Naive thymus-derived CD4-positive, alpha-beta T cell (primary cell): ENCODE measurements at regions of chr20 and their contacts with region 1.

Region 1: DNA sequence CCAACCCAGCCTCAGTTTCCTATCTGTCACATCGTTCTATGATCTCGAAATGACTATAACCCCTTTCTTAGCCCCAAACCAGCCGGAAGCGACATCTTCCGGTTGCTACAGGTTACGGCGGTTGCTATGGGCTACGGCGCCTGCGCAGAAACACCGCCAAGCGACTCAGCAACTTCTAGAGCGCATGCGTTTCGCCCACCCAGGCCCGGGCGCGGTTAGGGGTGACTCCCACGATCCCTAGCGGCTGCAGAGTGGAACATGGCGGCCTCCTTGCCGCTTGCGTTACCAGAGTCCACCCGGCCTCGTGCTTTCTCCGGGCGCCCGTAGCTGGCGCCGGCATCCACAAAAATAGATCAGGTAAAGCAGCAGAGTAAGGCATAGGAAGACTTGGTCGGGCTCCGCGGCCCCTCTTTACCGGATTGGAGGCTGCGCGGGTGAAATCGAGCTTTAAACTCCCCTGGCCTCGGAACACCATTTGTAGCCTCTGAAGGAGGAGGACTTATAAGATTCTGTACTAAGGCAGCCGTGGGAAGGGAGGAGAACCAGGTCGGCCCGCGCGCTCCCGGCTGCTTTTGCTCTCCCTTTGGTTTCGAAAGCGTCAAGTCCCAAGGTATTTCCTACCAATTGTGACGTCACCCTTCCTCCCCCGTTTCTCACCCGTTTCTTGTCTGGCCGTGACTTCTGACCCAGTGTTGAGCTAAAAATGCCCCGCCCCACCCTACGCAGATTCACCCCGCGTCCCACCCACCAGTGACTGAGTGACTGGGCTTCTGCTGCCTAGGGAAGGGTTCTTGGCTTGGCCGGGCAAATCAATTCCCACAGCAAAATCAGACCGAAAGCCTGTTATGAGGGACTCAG is 3.5 kb downstream of the SDCBP2 start:
- DNase-seq: peak; percentile 96 to 99 (median 98)
- ATAC-seq: peak; percentile 92
- H3K4me3 ChIP-seq: peak overlapping the region; percentile 95
- H3K4me3 Mint-ChIP-seq: no peak overlapping the region
- H3K27ac ChIP-seq: peak overlapping the region; percentile 97
- H3K27ac Mint-ChIP-seq: no peak overlapping the region
- H3K4me1 ChIP-seq: peaks cover 18 to 25% of the 10 kb centered on the region in 2 donors
- H3K4me1 Mint-ChIP-seq: peaks cover 0 to 31% (median 14%) of the 10 kb centered on the region in 7 donors
- H3K27me3 ChIP-seq: no peaks in the 10 kb centered on the region
- H3K27me3 Mint-ChIP-seq: no peaks in the 10 kb centered on the region

Region 2: GRCh38 chr20:1266167-1266973 is 59.0 kb before region 1 on chr20 and contains the start of gene SNPH:
- CTCF ChIA-PET with region 1: no interaction called
- POLR2A ChIA-PET with region 1: interaction called, 3 read pairs
- intact Hi-C with region 1: loop called (anchors 1 to 2 kb)
- DNase-seq: peak; percentile 41 to 79 (median 67)
- ATAC-seq: peak; percentile 93
- H3K4me3 ChIP-seq: peak within 1 kb of the TSS; percentile 66
- H3K4me3 Mint-ChIP-seq: peak within 1 kb of the TSS; percentile 79 to 99 (median 93)
- H3K27ac ChIP-seq: peak within 1 kb of the TSS; percentile 88
- H3K27ac Mint-ChIP-seq: peak within 1 kb of the TSS; percentile 77 to 100 (median 98)
- H3K4me1 ChIP-seq: peaks cover 9 to 54% of the 10 kb centered on the region in 2 donors
- H3K4me1 Mint-ChIP-seq: peaks cover 22 to 87% (median 81%) of the 10 kb centered on the region in 7 donors
- H3K27me3 ChIP-seq: no peaks in the 10 kb centered on the region
- H3K27me3 Mint-ChIP-seq: peaks cover 0 to 5% (median 0%) of the 10 kb centered on the region in 5 donors
- total RNA-seq, gene SNPH: 7.3 to 43.4 (median 22.5) TPM

Region 3: DNA sequence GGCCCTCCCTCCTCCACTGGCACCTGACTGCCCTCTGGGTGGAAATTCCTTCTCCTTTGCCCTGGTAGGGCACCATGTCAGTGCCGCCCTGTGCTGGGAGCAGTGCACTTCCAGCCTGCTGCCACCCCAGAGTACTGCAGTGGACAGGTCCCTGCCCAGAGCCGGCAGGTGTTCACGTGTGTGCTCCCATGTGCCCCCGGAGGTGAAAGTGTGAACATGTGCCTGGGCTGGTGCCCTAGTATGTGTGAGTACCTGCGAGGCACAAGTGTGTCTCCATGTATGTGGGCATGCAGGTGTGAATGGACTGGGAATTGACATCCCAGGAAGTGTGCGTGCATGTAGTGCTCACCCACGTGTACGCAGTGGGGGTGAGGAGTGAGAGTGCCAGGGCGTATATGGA is 25.9 kb before region 1 on chr20:
- CTCF ChIA-PET with region 1: no interaction called
- POLR2A ChIA-PET with region 1: no interaction called
- intact Hi-C with region 1: loop called in 1 of 2 experiments (anchors 1 kb)
- DNase-seq: peak in 6 of 9 donors; percentile 12 to 39 (median 32)
- ATAC-seq: peak; percentile 64
- H3K4me3 ChIP-seq: no peak overlapping the region
- H3K4me3 Mint-ChIP-seq: peak overlapping the region in 7 of 10 donors; percentile 40 to 62 (median 58)
- H3K27ac ChIP-seq: peak overlapping the region; percentile 17
- H3K27ac Mint-ChIP-seq: peak overlapping the region; percentile 52 to 93 (median 75)
- H3K4me1 ChIP-seq: peaks cover 12 to 23% of the 10 kb centered on the region in 2 donors
- H3K4me1 Mint-ChIP-seq: peaks cover 20 to 36% (median 32%) of the 10 kb centered on the region in 7 donors
- H3K27me3 ChIP-seq: no peaks in the 10 kb centered on the region
- H3K27me3 Mint-ChIP-seq: no peaks in the 10 kb centered on the region

Region 4: GRCh38 chr20:1313236-1313964 is 12.0 kb before region 1 on chr20:
- CTCF ChIA-PET with region 1: interaction called, 3 read pairs
- POLR2A ChIA-PET with region 1: no interaction called
- intact Hi-C with region 1: loop called (anchors 1 kb)
- DNase-seq: peak; percentile 41 to 69 (median 57)
- ATAC-seq: peak; percentile 85
- H3K4me3 ChIP-seq: no peak overlapping the region
- H3K4me3 Mint-ChIP-seq: peak overlapping the region in 2 of 10 donors; percentile 28 to 34
- H3K27ac ChIP-seq: no peak overlapping the region
- H3K27ac Mint-ChIP-seq: peak overlapping the region in 1 of 9 donors; percentile 48
- H3K4me1 ChIP-seq: peaks cover 5 to 7% of the 10 kb centered on the region in 2 donors
- H3K4me1 Mint-ChIP-seq: peaks cover 0 to 16% (median 4%) of the 10 kb centered on the region in 7 donors
- H3K27me3 ChIP-seq: no peaks in the 10 kb centered on the region
- H3K27me3 Mint-ChIP-seq: no peaks in the 10 kb centered on the region

Region 5: DNA sequence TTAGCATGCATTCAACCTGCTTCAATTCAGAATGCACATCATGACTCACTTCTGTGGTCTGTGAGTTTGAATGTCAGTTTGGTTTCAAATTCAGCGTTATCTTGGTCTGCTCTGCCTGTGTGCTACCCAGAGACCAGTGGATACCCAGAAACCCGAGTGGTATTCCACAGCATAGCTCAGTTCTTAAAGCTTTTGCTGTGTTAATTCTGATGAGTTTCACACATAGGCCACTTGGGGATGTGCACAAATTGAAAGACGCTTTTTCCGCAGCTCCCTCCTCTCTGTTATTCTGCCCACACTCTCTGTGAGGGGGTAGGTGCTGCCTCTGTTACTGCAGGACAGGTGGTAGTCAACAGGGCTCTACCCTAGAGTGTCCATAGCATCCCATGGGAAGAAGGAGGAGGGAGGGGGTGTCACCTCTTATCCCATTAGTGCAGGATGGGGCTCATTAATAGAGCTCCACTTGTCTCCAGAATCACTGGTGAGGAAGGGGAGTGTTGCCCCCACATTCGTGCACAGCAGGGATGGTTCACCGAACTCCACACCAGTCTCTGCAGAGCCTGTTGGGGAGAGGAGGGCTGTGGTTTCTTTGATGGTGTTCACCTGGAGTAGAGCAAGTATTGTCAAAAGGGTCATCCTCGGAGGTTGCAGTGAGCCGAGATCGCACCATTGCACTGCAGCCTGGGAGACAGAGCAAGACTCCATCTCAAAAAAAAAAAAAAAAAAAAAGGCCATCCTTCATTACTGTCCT is 32.7 kb after region 1 on chr20:
- CTCF ChIA-PET with region 1: no interaction called
- POLR2A ChIA-PET with region 1: no interaction called
- intact Hi-C with region 1: loop called in 1 of 2 experiments (anchors 1 kb)
- DNase-seq: peak in 1 of 9 donors; percentile 55
- ATAC-seq: no peak
- H3K4me3 ChIP-seq: no peak overlapping the region
- H3K4me3 Mint-ChIP-seq: peak overlapping the region; percentile 36 to 78 (median 48)
- H3K27ac ChIP-seq: no peak overlapping the region
- H3K27ac Mint-ChIP-seq: peak overlapping the region in 8 of 9 donors; percentile 51 to 80 (median 70)
- H3K4me1 ChIP-seq: peaks cover 0 to 10% of the 10 kb centered on the region in 2 donors
- H3K4me1 Mint-ChIP-seq: peaks cover 24 to 67% (median 55%) of the 10 kb centered on the region in 7 donors
- H3K27me3 ChIP-seq: no peaks in the 10 kb centered on the region
- H3K27me3 Mint-ChIP-seq: no peaks in the 10 kb centered on the region

Region 6: DNA sequence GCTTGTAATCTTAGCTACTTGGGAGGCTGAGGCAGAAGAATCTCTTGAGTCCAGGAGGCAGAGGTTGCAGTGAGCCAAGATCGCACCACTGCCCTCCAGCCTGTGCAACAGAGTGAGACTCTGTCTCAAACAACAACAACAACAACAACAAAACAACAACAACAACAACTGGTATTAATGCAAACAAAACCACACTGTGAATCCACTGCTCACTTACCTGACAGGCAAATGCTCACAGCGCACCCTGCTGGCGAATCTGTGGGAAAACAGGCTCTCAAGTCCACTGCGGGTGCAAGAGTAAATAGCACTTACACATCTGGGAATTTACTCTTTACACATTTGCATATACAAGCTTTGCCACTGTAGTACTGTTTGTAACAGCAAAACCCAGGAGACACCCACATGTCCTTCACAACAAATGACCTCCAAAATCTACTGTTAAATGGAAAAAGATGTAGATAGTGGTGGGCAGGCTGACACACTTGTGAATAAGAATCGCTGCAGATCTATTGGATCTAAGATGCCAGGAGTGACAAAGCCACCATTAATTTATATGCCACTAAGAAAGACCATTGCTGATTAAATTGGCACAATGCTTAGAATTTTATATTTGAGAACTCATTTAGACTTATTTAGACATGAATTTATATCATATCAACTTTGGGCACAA is 112.0 kb after region 1 on chr20:
- CTCF ChIA-PET with region 1: interaction called, 4 read pairs
- POLR2A ChIA-PET with region 1: interaction called, 3 read pairs
- intact Hi-C with region 1: loop called (anchors 1 kb)
- DNase-seq: peak; percentile 55 to 79 (median 72)
- ATAC-seq: peak; percentile 72
- H3K4me3 ChIP-seq: no peak overlapping the region
- H3K4me3 Mint-ChIP-seq: peak overlapping the region in 1 of 10 donors; percentile 35
- H3K27ac ChIP-seq: no peak overlapping the region
- H3K27ac Mint-ChIP-seq: peak overlapping the region in 3 of 9 donors; percentile 8 to 73 (median 16)
- H3K4me1 ChIP-seq: peaks cover 11 to 17% of the 10 kb centered on the region in 2 donors
- H3K4me1 Mint-ChIP-seq: peaks cover 25 to 53% (median 49%) of the 10 kb centered on the region in 7 donors
- H3K27me3 ChIP-seq: no peaks in the 10 kb centered on the region
- H3K27me3 Mint-ChIP-seq: peaks cover 0 to 19% (median 0%) of the 10 kb centered on the region in 5 donors

Region 7: GRCh38 chr20:1503564-1504227 is 178.3 kb after region 1 on chr20:
- CTCF ChIA-PET with region 1: no interaction called
- POLR2A ChIA-PET with region 1: no interaction called
- intact Hi-C with region 1: loop called in 1 of 2 experiments (anchors 1 kb)
- DNase-seq: peak; percentile 31 to 81 (median 78)
- ATAC-seq: peak; percentile 100
- H3K4me3 ChIP-seq: no peak overlapping the region
- H3K4me3 Mint-ChIP-seq: peak overlapping the region in 1 of 10 donors; percentile 51
- H3K27ac ChIP-seq: no peak overlapping the region
- H3K27ac Mint-ChIP-seq: peak overlapping the region in 4 of 9 donors; percentile 3 to 75 (median 20)
- H3K4me1 ChIP-seq: no peaks in the 10 kb centered on the region
- H3K4me1 Mint-ChIP-seq: peaks cover 3 to 8% (median 4%) of the 10 kb centered on the region in 7 donors
- H3K27me3 ChIP-seq: peaks cover 0 to 6% of the 10 kb centered on the region in 2 donors
- H3K27me3 Mint-ChIP-seq: peaks cover 9 to 61% (median 31%) of the 10 kb centered on the region in 5 donors